Activated CD8-positive, alpha-beta T cell treated with anti-CD3 and anti-CD28 coated beads, Interleukin-2, amount 10 ng/mL, durations not matched to agents 7 days and 5 days (primary cell): ENCODE measurements at regions of chr1 and their contacts with region 1.

Region 1: GRCh38 chr1:58652651-58653184 is 47.1 kb downstream of the MYSM1 start:
- DNase-seq: peak; percentile 80
- ATAC-seq: peak; percentile 85
- H3K4me3 Mint-ChIP-seq: no peak overlapping the region
- H3K27ac Mint-ChIP-seq: no peak overlapping the region
- H3K4me1 Mint-ChIP-seq: peaks cover 34% of the 10 kb centered on the region
- H3K27me3 Mint-ChIP-seq: no peaks in the 10 kb centered on the region

Region 2: GRCh38 chr1:58528518-58528917 is 124.2 kb before region 1 on chr1:
- CTCF ChIA-PET with region 1: interaction called, 10 read pairs
- POLR2A ChIA-PET with region 1: no interaction called
- DNase-seq: no peak
- ATAC-seq: no peak
- H3K4me3 Mint-ChIP-seq: no peak overlapping the region
- H3K27ac Mint-ChIP-seq: no peak overlapping the region
- H3K4me1 Mint-ChIP-seq: no peaks in the 10 kb centered on the region
- H3K27me3 Mint-ChIP-seq: no peaks in the 10 kb centered on the region

Region 3: DNA sequence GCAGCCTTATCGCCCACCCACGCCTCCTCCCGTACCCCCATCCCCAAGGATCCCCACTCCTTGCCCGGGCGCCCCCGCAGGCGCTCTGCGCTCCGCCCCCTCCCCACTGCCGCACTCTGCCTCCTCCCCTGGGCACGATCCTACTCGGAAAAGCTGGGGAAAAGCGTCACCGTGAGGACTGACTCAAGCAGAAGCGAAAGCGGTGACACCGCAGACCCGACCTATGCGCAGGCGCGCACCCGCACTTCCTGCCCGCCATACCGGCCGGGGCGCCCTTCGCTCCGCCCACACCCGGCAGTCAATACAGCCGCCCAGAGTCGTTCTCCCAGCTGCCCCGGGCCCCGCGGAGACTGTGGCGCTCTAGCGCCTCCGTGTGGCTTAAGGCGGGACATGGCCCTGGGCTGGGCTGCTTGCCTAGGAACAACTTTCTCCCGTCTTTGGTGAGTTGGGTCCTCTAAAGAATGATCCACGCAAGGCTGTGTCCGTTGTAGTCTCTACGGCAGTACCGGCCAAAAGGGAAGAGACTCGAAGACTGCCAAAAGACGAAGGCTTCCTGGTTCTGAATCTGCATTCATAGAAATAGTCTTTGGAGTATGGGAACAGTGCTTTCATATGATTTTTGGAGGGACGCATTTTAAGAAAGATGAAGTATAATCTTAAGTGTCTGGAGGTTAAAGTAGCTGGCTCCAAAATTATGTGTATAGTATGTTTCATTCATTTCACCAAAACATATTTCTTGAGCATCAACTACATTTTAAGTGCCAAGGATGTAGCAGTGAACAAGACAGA is 106.0 kb before region 1 on chr1 and contains the start of gene OMA1:
- CTCF ChIA-PET with region 1: interaction called, 27 read pairs
- POLR2A ChIA-PET with region 1: no interaction called
- DNase-seq: peak; percentile 97
- ATAC-seq: peak; percentile 96
- H3K4me3 Mint-ChIP-seq: peak within 1 kb of the TSS; percentile 91
- H3K27ac Mint-ChIP-seq: peak within 1 kb of the TSS; percentile 98
- H3K4me1 Mint-ChIP-seq: peaks cover 16% of the 10 kb centered on the region
- H3K27me3 Mint-ChIP-seq: peaks cover 3% of the 10 kb centered on the region
- total RNA-seq, gene OMA1: 22.3 to 23.9 TPM

Region 4: GRCh38 chr1:58679463-58679862 is 26.7 kb after region 1 on chr1:
- CTCF ChIA-PET with region 1: interaction called, 12 read pairs
- POLR2A ChIA-PET with region 1: no interaction called
- DNase-seq: no peak
- ATAC-seq: no peak
- H3K4me3 Mint-ChIP-seq: no peak overlapping the region
- H3K27ac Mint-ChIP-seq: no peak overlapping the region
- H3K4me1 Mint-ChIP-seq: peaks cover 15% of the 10 kb centered on the region
- H3K27me3 Mint-ChIP-seq: no peaks in the 10 kb centered on the region